PC-9 (cell line): ENCODE measurements at regions of chr2 and their contacts with region 1.

Region 1: GRCh38 chr2:96359310-96359709 is 23.7 kb downstream of the NCAPH start:
- DNase-seq: peak in 1 of 2 experiments; percentile 35
- H3K4me3 ChIP-seq: no peak overlapping the region
- H3K27ac ChIP-seq: no peak overlapping the region
- H3K4me1 ChIP-seq: no peaks in the 10 kb centered on the region
- H3K27me3 ChIP-seq: no peaks in the 10 kb centered on the region
- CTCF ChIP-seq: peak; percentile 61

Region 2: GRCh38 chr2:96186562-96186961 is 172.7 kb before region 1 on chr2:
- CTCF ChIA-PET with region 1: no interaction called
- POLR2A ChIA-PET with region 1: no interaction called
- intact Hi-C with region 1: no loop called
- DNase-seq: no peak
- H3K4me3 ChIP-seq: no peak overlapping the region
- H3K27ac ChIP-seq: no peak overlapping the region
- H3K4me1 ChIP-seq: no peaks in the 10 kb centered on the region
- H3K27me3 ChIP-seq: no peaks in the 10 kb centered on the region
- CTCF ChIP-seq: no peak

Region 3: DNA sequence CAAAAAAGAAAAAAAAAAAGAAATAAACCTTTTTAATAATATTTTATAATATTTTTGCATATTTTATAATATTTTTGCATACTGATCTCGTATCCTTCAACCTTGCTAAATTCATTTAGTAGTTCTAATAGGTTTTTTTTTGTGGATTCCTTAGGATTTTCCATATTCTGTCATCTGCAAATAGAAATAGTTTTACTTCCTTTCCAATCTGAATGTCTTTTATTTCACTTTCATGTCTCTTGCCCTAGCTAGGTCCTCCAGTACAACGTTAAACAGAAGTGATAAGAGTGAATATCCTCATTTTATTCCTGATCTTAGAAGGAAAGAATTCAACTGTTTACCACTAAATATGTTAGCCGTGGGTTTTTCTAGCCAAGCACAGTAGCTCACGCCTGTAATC is 366.8 kb after region 1 on chr2:
- CTCF ChIA-PET with region 1: no interaction called
- POLR2A ChIA-PET with region 1: interaction called, 15 read pairs
- intact Hi-C with region 1: no loop called
- DNase-seq: peak in 1 of 2 experiments; percentile 30
- H3K4me3 ChIP-seq: no peak overlapping the region
- H3K27ac ChIP-seq: no peak overlapping the region
- H3K4me1 ChIP-seq: no peaks in the 10 kb centered on the region
- H3K27me3 ChIP-seq: no peaks in the 10 kb centered on the region
- CTCF ChIP-seq: no peak